MCF 10A (cell line): ENCODE measurements at regions of chr1 and their contacts with region 1.

Region 1: GRCh38 chr1:205919026-205919746 is 24.1 kb downstream of the SLC26A9 start:
- DNase-seq: peak; percentile 95
- H3K4me3 Mint-ChIP-seq: no peak overlapping the region
- H3K27ac Mint-ChIP-seq: no peak overlapping the region
- H3K4me1 Mint-ChIP-seq: peaks cover 8% of the 10 kb centered on the region
- H3K27me3 Mint-ChIP-seq: peaks cover 27% of the 10 kb centered on the region
- CTCF ChIP-seq: peak; percentile 100

Region 2: DNA sequence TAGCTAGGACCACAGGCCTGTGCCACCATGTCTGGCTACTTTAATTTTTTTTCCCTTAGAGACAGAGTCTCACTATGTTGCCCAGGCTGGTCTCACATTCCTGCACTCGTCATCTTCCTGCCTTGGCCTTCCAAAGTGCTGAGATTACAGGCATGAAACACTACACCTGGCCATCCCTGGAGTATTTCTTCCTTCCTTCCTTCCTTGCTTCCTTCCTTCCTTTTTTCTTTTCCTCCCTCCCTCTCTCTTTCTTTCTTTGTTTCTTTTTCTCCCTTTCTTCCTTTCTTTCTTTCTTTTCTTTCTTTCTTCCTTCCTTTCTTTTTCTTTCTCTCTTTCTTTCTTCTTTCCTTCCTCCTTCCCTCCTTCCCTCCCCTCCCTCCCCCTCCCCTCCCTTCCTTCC is 22.9 kb before region 1 on chr1:
- CTCF ChIA-PET with region 1: interaction called, 15 read pairs
- POLR2A ChIA-PET with region 1: no interaction called
- intact Hi-C with region 1: no loop called
- DNase-seq: no peak
- H3K4me3 Mint-ChIP-seq: no peak overlapping the region
- H3K27ac Mint-ChIP-seq: no peak overlapping the region
- H3K4me1 Mint-ChIP-seq: no peaks in the 10 kb centered on the region
- H3K27me3 Mint-ChIP-seq: peaks cover 14% of the 10 kb centered on the region
- CTCF ChIP-seq: no peak

Region 3: GRCh38 chr1:205933671-205934618 is 14.8 kb after region 1 on chr1:
- CTCF ChIA-PET with region 1: interaction called, 56 read pairs
- POLR2A ChIA-PET with region 1: interaction called, 4 read pairs
- intact Hi-C with region 1: no loop called
- DNase-seq: peak; percentile 98
- H3K4me3 Mint-ChIP-seq: peak overlapping the region; percentile 2
- H3K27ac Mint-ChIP-seq: peak overlapping the region; percentile 60
- H3K4me1 Mint-ChIP-seq: peaks cover 40% of the 10 kb centered on the region
- H3K27me3 Mint-ChIP-seq: peaks cover 56% of the 10 kb centered on the region
- CTCF ChIP-seq: no peak

Region 4: DNA sequence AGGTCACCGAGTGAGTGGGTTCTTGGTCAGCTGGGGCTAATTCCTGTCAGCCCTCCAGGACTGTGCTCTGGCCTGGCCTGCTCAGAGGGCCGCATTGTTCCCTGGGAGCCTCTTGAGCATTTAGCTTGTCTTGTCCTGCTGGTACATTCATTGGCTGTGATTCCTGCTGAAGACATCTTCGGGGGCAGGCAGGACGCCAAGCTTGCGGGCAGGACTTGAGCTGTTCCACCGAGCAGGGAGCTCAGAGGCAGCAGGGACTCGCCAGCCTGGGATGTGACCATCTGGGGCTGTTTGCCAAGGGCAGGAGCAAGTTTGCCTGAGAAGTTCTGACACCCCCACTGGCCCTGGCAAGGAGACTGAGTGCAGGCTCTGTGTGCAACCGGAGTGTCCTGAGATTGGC is 31.1 kb after region 1 on chr1:
- CTCF ChIA-PET with region 1: interaction called, 138 read pairs
- POLR2A ChIA-PET with region 1: interaction called, 10 read pairs
- intact Hi-C with region 1: no loop called
- DNase-seq: peak; percentile 98
- H3K4me3 Mint-ChIP-seq: peak overlapping the region; percentile 7
- H3K27ac Mint-ChIP-seq: peak overlapping the region; percentile 1
- H3K4me1 Mint-ChIP-seq: peaks cover 69% of the 10 kb centered on the region
- H3K27me3 Mint-ChIP-seq: peaks cover 68% of the 10 kb centered on the region
- CTCF ChIP-seq: no peak

Region 5: DNA sequence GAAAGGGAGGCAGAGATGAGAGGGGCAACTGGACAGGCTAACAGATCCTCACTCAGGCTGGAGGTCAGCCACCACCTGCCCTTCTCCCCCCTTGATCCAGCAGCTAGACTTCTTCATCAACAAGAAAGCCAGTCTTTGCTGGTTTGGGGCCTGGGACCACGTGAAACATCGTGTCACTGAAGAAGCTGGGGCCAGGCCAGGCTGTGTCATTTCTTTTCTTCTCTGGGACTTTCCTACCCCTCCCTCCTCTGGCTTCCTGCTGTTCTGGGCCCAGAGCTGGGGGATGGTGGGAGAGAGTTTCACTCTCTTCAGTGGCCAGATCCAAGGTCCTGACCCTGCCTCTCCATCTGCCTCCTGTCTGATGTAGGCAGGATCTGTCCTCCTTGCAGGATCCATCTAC is 42.2 kb after region 1 on chr1:
- CTCF ChIA-PET with region 1: interaction called, 111 read pairs
- POLR2A ChIA-PET with region 1: interaction called, 5 read pairs
- intact Hi-C with region 1: no loop called
- DNase-seq: peak; percentile 73
- H3K4me3 Mint-ChIP-seq: no peak overlapping the region
- H3K27ac Mint-ChIP-seq: peak overlapping the region; percentile 20
- H3K4me1 Mint-ChIP-seq: peaks cover 34% of the 10 kb centered on the region
- H3K27me3 Mint-ChIP-seq: peaks cover 47% of the 10 kb centered on the region
- CTCF ChIP-seq: no peak

Region 6: DNA sequence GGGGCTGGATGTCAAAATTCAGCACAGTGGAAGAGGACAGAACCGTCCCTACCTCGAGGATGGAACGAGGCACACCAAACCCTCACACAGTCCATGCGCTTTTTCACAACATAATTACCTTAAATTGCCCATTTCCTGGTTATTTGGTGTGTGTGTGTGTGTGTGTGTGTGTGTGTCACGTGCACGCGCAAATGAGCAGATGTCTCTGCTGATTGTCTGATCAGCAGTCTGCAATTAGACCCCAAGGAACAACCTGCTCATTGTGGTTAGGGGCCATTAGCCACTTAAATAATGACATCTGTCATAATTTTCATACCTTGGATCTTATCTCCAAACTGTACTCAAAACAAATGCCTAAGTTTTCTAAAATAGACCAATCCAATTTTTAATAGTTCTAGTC is 174.8 kb after region 1 on chr1:
- CTCF ChIA-PET with region 1: interaction called, 11 read pairs
- POLR2A ChIA-PET with region 1: no interaction called
- intact Hi-C with region 1: no loop called
- DNase-seq: no peak
- H3K4me3 Mint-ChIP-seq: no peak overlapping the region
- H3K27ac Mint-ChIP-seq: no peak overlapping the region
- H3K4me1 Mint-ChIP-seq: no peaks in the 10 kb centered on the region
- H3K27me3 Mint-ChIP-seq: peaks cover 9% of the 10 kb centered on the region
- CTCF ChIP-seq: no peak